Panc1 (cell line): ENCODE measurements at regions of chrX and their contacts with region 1.

Region 1: GRCh38 chrX:108070891-108071290 is 20.5 kb downstream of the PSMD10 start:
- DNase-seq: no peak
- ATAC-seq: peak; percentile 73; the same call in 1 of the 2 replicates
- H3K4me3 ChIP-seq: no peak overlapping the region
- H3K27ac ChIP-seq: no peak overlapping the region
- H3K4me1 ChIP-seq: peaks cover 5% of the 10 kb centered on the region
- H3K27me3 ChIP-seq: no peaks in the 10 kb centered on the region
- CTCF ChIP-seq: no peak

Region 2: GRCh38 chrX:107935664-107936433 is 135.0 kb before region 1 on chrX:
- CTCF ChIA-PET with region 1: no interaction called
- POLR2A ChIA-PET with region 1: no interaction called
- in situ Hi-C with region 1: no loop called
- intact Hi-C with region 1: loop called (anchors 10 kb)
- DNase-seq: peak; percentile 8
- ATAC-seq: peak; percentile 73
- H3K4me3 ChIP-seq: peak overlapping the region; percentile 32 to 70
- H3K27ac ChIP-seq: no peak overlapping the region
- H3K4me1 ChIP-seq: no peaks in the 10 kb centered on the region
- H3K27me3 ChIP-seq: no peaks in the 10 kb centered on the region
- CTCF ChIP-seq: no peak

Region 3: GRCh38 chrX:108020631-108021030 is 50.3 kb before region 1 on chrX:
- CTCF ChIA-PET with region 1: interaction called, 5 read pairs
- POLR2A ChIA-PET with region 1: no interaction called
- in situ Hi-C with region 1: no loop called
- intact Hi-C with region 1: loop called (anchors 1 kb)
- DNase-seq: no peak
- ATAC-seq: peak; percentile 62
- H3K4me3 ChIP-seq: no peak overlapping the region
- H3K27ac ChIP-seq: no peak overlapping the region
- H3K4me1 ChIP-seq: no peaks in the 10 kb centered on the region
- H3K27me3 ChIP-seq: no peaks in the 10 kb centered on the region
- CTCF ChIP-seq: peak; percentile 69